Activated naive CD4-positive, alpha-beta T cell treated with anti-CD3 and anti-CD28 coated beads for 36 hours (primary cell): ENCODE measurements at regions of chr17 and their contacts with region 1.

Region 1: GRCh38 chr17:7351665-7352501 is at the start of gene KCTD11:
- DNase-seq: peak; percentile 76
- H3K4me3 Mint-ChIP-seq: peak within 1 kb of the TSS; percentile 62
- H3K27ac Mint-ChIP-seq: peak within 1 kb of the TSS; percentile 51
- H3K4me1 Mint-ChIP-seq: peaks cover 43% of the 10 kb centered on the region
- H3K27me3 Mint-ChIP-seq: no peaks in the 10 kb centered on the region
- total RNA-seq, gene KCTD11: 0.41 to 0.47 TPM

Region 2: GRCh38 chr17:7280519-7281429 is 71.1 kb before region 1 on chr17:
- CTCF ChIA-PET with region 1: interaction called, 4 read pairs
- intact Hi-C with region 1: loop called (anchors 1 kb)
- DNase-seq: peak; percentile 91
- H3K4me3 Mint-ChIP-seq: peak overlapping the region; percentile 74
- H3K27ac Mint-ChIP-seq: no peak overlapping the region
- H3K4me1 Mint-ChIP-seq: peaks cover 20% of the 10 kb centered on the region
- H3K27me3 Mint-ChIP-seq: peaks cover 17% of the 10 kb centered on the region

Region 3: GRCh38 chr17:7314719-7315569 is 36.9 kb before region 1 on chr17 and contains the start of gene GPS2:
- CTCF ChIA-PET with region 1: interaction called, 3 read pairs
- intact Hi-C with region 1: loop called (anchors 2 kb)
- DNase-seq: peak; percentile 95
- H3K4me3 Mint-ChIP-seq: peak within 1 kb of the TSS; percentile 86
- H3K27ac Mint-ChIP-seq: peak within 1 kb of the TSS; percentile 88
- H3K4me1 Mint-ChIP-seq: peaks cover 49% of the 10 kb centered on the region
- H3K27me3 Mint-ChIP-seq: no peaks in the 10 kb centered on the region
- total RNA-seq, gene GPS2: 28.2 to 32.2 TPM

Region 4: GRCh38 chr17:7369825-7370224 is 17.9 kb after region 1 on chr17:
- CTCF ChIA-PET with region 1: interaction called, 13 read pairs
- intact Hi-C with region 1: no loop called
- DNase-seq: no peak
- H3K4me3 Mint-ChIP-seq: no peak overlapping the region
- H3K27ac Mint-ChIP-seq: no peak overlapping the region
- H3K4me1 Mint-ChIP-seq: no peaks in the 10 kb centered on the region
- H3K27me3 Mint-ChIP-seq: peaks cover 2% of the 10 kb centered on the region

Region 5: GRCh38 chr17:7403977-7404736 is 52.3 kb after region 1 on chr17 and contains the start of gene TMEM256:
- CTCF ChIA-PET with region 1: interaction called, 3 read pairs
- intact Hi-C with region 1: loop called (anchors 5 kb)
- DNase-seq: peak; percentile 99
- H3K4me3 Mint-ChIP-seq: peak within 1 kb of the TSS; percentile 93
- H3K27ac Mint-ChIP-seq: peak within 1 kb of the TSS; percentile 93
- H3K4me1 Mint-ChIP-seq: peaks cover 19% of the 10 kb centered on the region
- H3K27me3 Mint-ChIP-seq: peaks cover 2% of the 10 kb centered on the region
- total RNA-seq, gene TMEM256: 65.6 to 66.3 TPM

Region 6: DNA sequence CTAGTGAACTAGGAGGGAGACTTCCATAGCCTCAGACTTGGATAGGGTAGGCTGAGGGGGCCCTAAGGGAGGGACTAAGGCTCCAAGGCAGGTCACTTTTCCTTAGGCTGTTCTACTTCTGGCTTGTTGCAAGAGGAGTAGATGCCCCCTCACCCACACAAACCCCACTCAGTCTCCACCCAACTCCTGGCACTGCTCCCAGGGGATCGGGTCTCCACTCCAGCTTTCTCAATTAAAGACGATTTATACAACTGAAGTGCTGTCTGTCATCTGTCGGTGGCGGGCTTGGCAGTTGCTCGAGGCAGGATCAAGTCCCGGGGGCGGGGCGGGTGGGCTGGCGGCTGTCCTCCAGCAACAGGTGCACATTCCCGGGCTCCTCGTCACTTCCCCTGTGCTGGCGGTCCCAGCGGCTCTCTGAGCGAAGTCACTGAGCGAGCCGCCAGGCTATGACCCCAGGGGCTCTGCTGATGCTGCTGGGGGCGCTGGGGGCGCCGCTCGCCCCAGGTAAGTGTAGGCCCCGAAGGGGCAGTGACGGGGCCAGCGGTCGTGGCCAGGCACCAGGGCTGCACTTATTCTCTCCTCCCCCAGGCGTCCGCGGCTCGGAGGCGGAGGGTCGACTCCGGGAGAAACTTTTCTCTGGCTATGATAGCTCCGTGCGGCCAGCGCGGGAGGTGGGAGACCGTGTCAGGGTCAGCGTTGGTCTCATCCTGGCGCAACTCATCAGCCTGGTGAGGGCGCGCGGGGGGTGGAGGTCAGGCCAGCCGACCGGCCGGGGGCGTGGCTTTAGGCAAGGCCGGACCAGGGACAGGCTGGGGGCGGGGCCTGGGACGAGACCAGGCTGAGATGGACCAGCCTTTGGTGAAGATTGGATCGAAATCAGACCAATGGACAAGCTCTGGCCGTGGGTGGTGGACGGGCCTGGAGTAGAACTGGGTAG is 93.1 kb after region 1 on chr17 and contains the start of gene CHRNB1:
- CTCF ChIA-PET with region 1: interaction called, 18 read pairs
- intact Hi-C with region 1: no loop called
- DNase-seq: peak; percentile 28
- H3K4me3 Mint-ChIP-seq: peak within 1 kb of the TSS; percentile 68
- H3K27ac Mint-ChIP-seq: no peak within 1 kb of the TSS
- H3K4me1 Mint-ChIP-seq: peaks cover 35% of the 10 kb centered on the region
- H3K27me3 Mint-ChIP-seq: peaks cover 60% of the 10 kb centered on the region
- total RNA-seq, gene CHRNB1: 5.1 to 5.9 TPM

Region 7: DNA sequence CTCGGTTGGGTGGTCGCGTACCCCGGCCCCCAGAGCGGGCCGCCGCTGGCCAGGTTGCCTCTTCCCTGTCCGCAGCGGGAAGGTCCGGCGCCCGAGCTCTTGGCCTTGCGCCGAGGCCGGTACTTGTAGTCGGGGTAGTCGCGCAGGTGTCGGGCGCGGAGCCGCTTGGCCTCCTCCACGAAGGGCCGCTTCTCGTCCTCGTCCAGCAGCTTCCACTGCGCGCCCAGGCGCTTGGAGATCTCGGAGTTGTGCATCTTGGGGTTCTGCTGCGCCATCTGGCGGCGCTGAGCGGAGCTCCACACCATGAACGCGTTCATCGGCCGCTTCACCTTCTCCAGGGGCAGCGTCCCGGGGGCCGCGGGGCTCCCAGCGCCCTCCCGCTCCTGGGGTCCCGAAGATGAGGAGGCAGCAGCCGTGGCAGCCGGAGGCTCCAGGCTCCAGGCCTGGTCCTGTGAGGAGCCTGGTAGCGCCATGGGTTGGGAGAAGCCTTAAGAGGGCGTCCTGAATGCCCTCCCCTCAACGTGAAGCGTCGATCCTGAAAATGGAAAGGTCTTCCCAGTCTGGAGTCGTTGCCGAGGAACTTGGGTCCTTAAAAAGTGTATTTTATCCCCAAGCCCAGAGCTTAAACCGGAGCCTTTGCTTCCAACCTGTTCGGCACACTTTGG is 237.5 kb after region 1 on chr17:
- CTCF ChIA-PET with region 1: interaction called, 7 read pairs
- intact Hi-C with region 1: loop called (anchors 1 kb)
- DNase-seq: peak; percentile 74
- H3K4me3 Mint-ChIP-seq: no peak overlapping the region
- H3K27ac Mint-ChIP-seq: no peak overlapping the region
- H3K4me1 Mint-ChIP-seq: peaks cover 21% of the 10 kb centered on the region
- H3K27me3 Mint-ChIP-seq: no peaks in the 10 kb centered on the region